MCF 10A (cell line): ENCODE measurements at regions of chr1 and their contacts with region 1.

Region 1: DNA sequence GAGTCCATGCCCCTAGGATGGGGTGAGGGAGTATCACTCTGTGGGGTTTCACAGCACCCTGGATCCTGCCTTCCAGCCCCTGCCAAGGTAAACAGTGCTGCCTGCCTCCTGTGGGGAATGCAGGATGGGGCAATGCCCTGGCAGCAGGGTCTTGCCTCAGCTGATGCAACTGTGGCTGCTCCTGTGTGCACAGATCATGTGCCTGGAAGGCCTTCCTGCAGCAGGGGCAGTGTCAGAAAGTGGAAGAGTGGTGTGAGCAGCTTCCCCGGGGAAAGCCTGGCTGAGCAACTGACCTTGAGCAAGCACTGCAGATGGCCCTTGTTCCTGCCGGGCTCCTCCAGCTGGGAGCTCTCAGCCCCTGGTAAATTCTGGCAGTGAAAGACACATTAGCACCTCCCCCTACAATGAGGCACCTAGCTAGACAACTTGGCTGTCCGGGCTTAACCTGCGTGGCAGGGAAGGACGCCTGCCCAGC is 9.9 kb downstream of the TOR3A start:
- DNase-seq: peak; percentile 98
- H3K4me3 Mint-ChIP-seq: peak overlapping the region; percentile 24
- H3K27ac Mint-ChIP-seq: peak overlapping the region; percentile 69
- H3K4me1 Mint-ChIP-seq: peaks cover 26% of the 10 kb centered on the region
- H3K27me3 Mint-ChIP-seq: no peaks in the 10 kb centered on the region
- CTCF ChIP-seq: no peak

Region 2: DNA sequence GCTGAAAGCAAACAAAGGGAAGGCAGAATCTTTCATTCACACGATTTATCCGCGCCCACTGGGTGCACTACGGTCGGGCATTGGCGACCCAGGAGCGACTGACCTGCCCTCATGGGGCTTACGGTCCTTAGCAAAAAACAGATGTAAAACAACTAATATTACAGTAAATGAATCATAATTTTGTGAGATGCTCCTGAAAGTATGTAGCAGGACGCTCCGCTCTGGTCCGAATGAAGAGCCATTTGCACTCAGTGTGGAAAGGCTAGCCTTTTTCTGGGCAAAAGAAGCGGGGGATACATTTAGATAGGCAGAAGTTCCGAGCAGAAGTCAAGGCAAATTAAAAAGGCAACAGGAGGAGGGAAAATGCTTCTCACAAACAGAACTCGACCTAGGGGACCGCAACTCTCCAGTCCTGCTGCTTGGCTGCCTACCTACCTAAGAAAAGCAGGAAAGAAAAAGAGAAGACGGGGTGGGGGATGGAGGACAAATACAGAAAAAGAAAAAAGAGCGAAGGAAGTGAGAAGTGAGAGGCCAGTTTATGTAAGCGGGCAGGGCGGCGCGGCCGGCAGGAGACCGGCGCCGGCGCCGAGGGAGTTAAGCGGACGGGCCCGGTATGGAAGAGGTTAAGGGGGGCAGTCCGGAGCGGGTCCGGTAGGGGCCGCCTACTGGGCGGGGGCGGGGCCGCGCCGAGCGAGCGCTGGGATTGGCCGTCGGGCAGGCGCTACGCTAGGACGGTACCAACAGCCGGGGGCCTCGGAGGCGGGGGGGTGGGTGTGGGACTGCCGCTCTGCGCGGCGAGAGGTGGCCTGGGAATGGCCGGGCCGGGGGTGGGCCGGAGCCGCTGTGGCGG is 66.4 kb before region 1 on chr1 and contains the start of gene FAM20B:
- CTCF ChIA-PET with region 1: no interaction called
- POLR2A ChIA-PET with region 1: no interaction called
- intact Hi-C with region 1: no loop called
- DNase-seq: peak; percentile 94
- H3K4me3 Mint-ChIP-seq: peak within 1 kb of the TSS; percentile 82
- H3K27ac Mint-ChIP-seq: peak within 1 kb of the TSS; percentile 68
- H3K4me1 Mint-ChIP-seq: peaks cover 31% of the 10 kb centered on the region
- H3K27me3 Mint-ChIP-seq: no peaks in the 10 kb centered on the region
- CTCF ChIP-seq: no peak
- total RNA-seq, gene FAM20B: 44.2 and 45.0 TPM in 2 replicates

Region 3: GRCh38 chr1:179105350-179105749 is 13.6 kb after region 1 on chr1:
- CTCF ChIA-PET with region 1: interaction called, 13 read pairs
- POLR2A ChIA-PET with region 1: interaction called, 5 read pairs
- intact Hi-C with region 1: no loop called
- DNase-seq: peak; percentile 27
- H3K4me3 Mint-ChIP-seq: no peak overlapping the region
- H3K27ac Mint-ChIP-seq: no peak overlapping the region
- H3K4me1 Mint-ChIP-seq: no peaks in the 10 kb centered on the region
- H3K27me3 Mint-ChIP-seq: no peaks in the 10 kb centered on the region
- CTCF ChIP-seq: peak; percentile 43